ENCODE measurements at regions of chr6 and their contacts with region 1.

Region 1: GRCh38 chr6:118768904-118769325 is 117.5 kb upstream of the CEP85L start:
- DNase-seq: peak; percentile 78
- H3K4me3 Mint-ChIP-seq: peak overlapping the region; percentile 34
- H3K27ac Mint-ChIP-seq: peak overlapping the region; percentile 81
- H3K4me1 Mint-ChIP-seq: peaks cover 18% of the 10 kb centered on the region
- H3K27me3 Mint-ChIP-seq: no peaks in the 10 kb centered on the region

Region 2: GRCh38 chr6:118717106-118717505 is 51.8 kb before region 1 on chr6:
- intact Hi-C with region 1: no loop called
- DNase-seq: no peak
- H3K4me3 Mint-ChIP-seq: no peak overlapping the region
- H3K27ac Mint-ChIP-seq: no peak overlapping the region
- H3K4me1 Mint-ChIP-seq: peaks cover 48% of the 10 kb centered on the region
- H3K27me3 Mint-ChIP-seq: no peaks in the 10 kb centered on the region

Region 3: GRCh38 chr6:118787724-118788423 is 19.0 kb after region 1 on chr6:
- intact Hi-C with region 1: no loop called
- DNase-seq: peak; percentile 66
- H3K4me3 Mint-ChIP-seq: no peak overlapping the region
- H3K27ac Mint-ChIP-seq: peak overlapping the region; percentile 35
- H3K4me1 Mint-ChIP-seq: peaks cover 21% of the 10 kb centered on the region
- H3K27me3 Mint-ChIP-seq: no peaks in the 10 kb centered on the region

Region 4: GRCh38 chr6:118799826-118800225 is 30.9 kb after region 1 on chr6:
- intact Hi-C with region 1: no loop called
- DNase-seq: peak; percentile 56
- H3K4me3 Mint-ChIP-seq: no peak overlapping the region
- H3K27ac Mint-ChIP-seq: no peak overlapping the region
- H3K4me1 Mint-ChIP-seq: peaks cover 29% of the 10 kb centered on the region
- H3K27me3 Mint-ChIP-seq: no peaks in the 10 kb centered on the region

Region 5: DNA sequence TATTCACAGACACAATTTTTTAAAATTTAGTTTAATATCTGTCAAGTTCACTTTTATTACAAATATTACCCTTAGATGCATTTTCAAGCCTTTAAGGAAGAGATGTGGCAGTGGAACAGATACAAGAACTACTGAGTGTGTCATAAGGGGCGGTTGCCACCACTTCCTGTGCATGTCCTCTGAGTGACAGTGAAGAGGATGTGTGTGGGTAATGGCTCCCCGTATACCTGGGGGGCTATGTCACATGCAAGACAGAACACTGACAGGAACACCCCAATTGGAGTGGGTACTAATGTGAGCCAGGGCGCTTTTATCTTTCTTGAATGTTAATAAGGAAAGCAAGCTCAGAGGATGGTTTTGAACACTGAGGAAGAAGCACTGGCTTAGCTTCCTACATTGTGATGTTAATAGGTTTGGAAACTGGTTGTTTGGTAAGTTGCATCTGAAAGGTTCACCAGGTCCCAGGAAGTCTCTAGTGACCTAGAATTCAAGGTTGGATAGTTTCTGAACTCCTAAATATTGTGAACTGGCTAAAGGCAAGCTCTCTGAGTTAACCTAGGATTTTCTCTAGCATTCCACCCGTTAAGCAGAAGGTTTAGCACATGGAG is 41.6 kb after region 1 on chr6:
- intact Hi-C with region 1: loop called (anchors 2 kb)
- DNase-seq: peak; percentile 87
- H3K4me3 Mint-ChIP-seq: peak overlapping the region; percentile 34
- H3K27ac Mint-ChIP-seq: peak overlapping the region; percentile 74
- H3K4me1 Mint-ChIP-seq: peaks cover 47% of the 10 kb centered on the region
- H3K27me3 Mint-ChIP-seq: no peaks in the 10 kb centered on the region

Region 6: GRCh38 chr6:119083007-119083406 is 314.1 kb after region 1 on chr6:
- intact Hi-C with region 1: no loop called
- DNase-seq: no peak
- H3K4me3 Mint-ChIP-seq: no peak overlapping the region
- H3K27ac Mint-ChIP-seq: no peak overlapping the region
- H3K4me1 Mint-ChIP-seq: peaks cover 8% of the 10 kb centered on the region
- H3K27me3 Mint-ChIP-seq: peaks cover 17% of the 10 kb centered on the region

Measured in activated CD4-positive, alpha-beta T cell treated with anti-CD3 and anti-CD28 coated beads, Interleukin-2, amount 10 ng/mL, durations not matched to agents 24 days and 14 days (primary cell).